Mammary epithelial cell (primary cell): ENCODE measurements at regions of chr9 and their contacts with region 1.

Region 1: DNA sequence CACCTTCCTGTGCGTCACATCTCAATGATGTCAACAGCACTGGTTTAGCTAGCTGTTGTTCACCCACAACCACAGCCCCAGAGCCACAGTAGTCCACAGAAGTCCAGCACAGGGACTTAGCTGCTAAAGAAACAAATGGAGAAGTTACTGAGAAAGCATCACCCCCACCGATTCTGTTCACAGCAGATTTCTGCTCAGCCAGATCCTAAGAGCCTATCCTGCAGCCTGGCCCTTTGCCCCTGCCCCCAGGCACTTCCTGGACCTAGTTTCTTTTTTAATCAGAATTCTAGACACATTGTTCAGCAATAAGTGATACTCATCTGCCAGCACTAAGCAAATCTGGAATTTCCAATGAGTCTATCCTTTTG is 7.4 kb downstream of the B4GALT1 start:
- DNase-seq: peak; percentile 90
- H3K4me3 ChIP-seq: peak overlapping the region in 1 of 3 experiments; percentile 6
- H3K27ac ChIP-seq: peak overlapping the region; percentile 96
- H3K4me1 ChIP-seq: peaks cover 95% of the 10 kb centered on the region
- H3K27me3 ChIP-seq: no peaks in the 10 kb centered on the region
- CTCF ChIP-seq: no peak

Region 2: GRCh38 chr9:33032865-33033264 is 126.9 kb before region 1 on chr9:
- CTCF ChIA-PET with region 1: no interaction called
- dilution Hi-C with region 1: no loop called
- in situ Hi-C with region 1: no loop called
- intact Hi-C with region 1: no loop called
- DNase-seq: no peak
- H3K4me3 ChIP-seq: no peak overlapping the region
- H3K27ac ChIP-seq: no peak overlapping the region
- H3K4me1 ChIP-seq: peaks cover 17% of the 10 kb centered on the region
- H3K27me3 ChIP-seq: no peaks in the 10 kb centered on the region
- CTCF ChIP-seq: no peak

Region 3: DNA sequence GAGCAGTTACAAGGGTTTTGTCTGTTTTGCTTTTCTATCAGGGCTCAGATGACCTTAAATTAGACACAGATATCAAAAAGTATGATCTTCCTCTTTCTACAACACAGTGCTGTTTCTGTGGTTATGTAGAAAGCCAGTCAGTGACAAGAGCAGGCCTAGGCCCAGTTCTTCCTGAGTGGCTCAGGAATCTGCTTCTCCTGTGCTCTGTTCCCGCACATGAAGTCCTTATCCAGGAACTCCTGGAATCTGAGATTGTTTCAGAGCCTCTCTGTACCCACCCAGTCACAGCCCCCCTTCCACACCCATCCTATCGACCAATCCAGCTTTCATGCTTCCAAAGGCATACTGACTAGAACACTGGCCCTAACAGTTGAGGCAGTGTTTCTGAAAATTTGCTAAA is 42.9 kb before region 1 on chr9:
- CTCF ChIA-PET with region 1: no interaction called
- dilution Hi-C with region 1: no loop called
- in situ Hi-C with region 1: no loop called
- intact Hi-C with region 1: loop called (anchors 5 kb)
- DNase-seq: no peak
- H3K4me3 ChIP-seq: no peak overlapping the region
- H3K27ac ChIP-seq: peak overlapping the region; percentile 76
- H3K4me1 ChIP-seq: peaks cover 28% of the 10 kb centered on the region
- H3K27me3 ChIP-seq: no peaks in the 10 kb centered on the region
- CTCF ChIP-seq: no peak

Region 4: GRCh38 chr9:33130508-33130911 is 29.2 kb before region 1 on chr9:
- CTCF ChIA-PET with region 1: no interaction called
- dilution Hi-C with region 1: loop called (anchors 5 kb)
- in situ Hi-C with region 1: no loop called
- intact Hi-C with region 1: no loop called
- DNase-seq: peak; percentile 53
- H3K4me3 ChIP-seq: no peak overlapping the region
- H3K27ac ChIP-seq: peak overlapping the region; percentile 14
- H3K4me1 ChIP-seq: peaks cover 28% of the 10 kb centered on the region
- H3K27me3 ChIP-seq: no peaks in the 10 kb centered on the region
- CTCF ChIP-seq: no peak